WTC11 (cell line): ENCODE measurements at regions of chr2 and their contacts with region 1.

Region 1: GRCh38 chr2:43024515-43025011 is 201.8 kb downstream of the ZFP36L2 start:
- DNase-seq: peak; percentile 85
- ATAC-seq: peak; percentile 92
- H3K4me3 Mint-ChIP-seq: no peak overlapping the region
- H3K27ac Mint-ChIP-seq: no peak overlapping the region
- H3K4me1 Mint-ChIP-seq: peaks cover 5% of the 10 kb centered on the region
- H3K27me3 Mint-ChIP-seq: peaks cover 3% of the 10 kb centered on the region
- CTCF ChIP-seq: peak; percentile 40; the same call in 1 of the 2 replicates

Region 2: DNA sequence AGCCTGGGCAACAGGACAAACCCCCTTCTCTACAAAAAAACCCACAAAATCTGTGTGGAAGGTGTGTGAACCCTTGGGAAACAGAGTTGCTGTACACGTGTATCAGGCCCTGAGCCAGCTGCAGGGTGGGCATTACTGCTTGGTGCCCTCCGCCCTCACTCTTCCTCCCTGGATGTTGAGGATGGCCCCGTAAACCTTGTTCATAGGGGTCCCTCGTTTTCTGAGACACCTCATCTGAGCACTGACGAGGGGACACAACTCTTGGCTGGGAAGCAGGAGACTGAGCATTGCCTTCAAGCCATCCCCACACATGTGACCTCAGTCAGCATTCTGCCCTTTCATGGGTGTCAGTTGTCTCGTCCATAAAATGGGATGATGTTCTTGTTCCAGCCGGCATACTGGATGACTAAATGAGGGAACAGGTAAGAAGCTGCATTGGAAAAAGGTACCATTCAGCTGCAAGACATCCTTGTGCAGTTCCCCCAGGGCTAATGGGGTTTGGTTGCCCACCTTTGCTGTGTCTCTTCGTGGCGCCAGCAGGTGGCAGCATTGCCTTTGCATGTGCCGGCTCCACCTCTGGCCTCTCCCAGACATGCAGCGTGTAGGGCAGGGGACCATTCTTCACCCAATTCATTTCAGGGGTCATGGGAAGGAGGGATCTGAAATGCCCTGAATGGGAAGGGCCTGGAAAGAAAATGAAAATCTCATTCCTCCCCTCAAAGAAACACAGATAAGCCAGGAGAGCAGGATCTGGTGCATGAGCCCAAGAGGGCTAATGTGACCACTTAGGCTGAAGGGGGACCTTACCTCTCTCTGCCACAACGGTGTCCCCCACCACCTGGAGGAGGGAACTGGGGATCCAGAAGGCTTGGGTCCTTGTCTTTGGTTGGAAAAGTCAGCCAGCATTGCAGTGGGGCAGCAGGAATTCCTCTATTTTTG is 195.8 kb before region 1 on chr2:
- CTCF ChIA-PET with region 1: interaction called, 11 read pairs
- POLR2A ChIA-PET with region 1: no interaction called
- DNase-seq: peak; percentile 82
- ATAC-seq: peak; percentile 89
- H3K4me3 Mint-ChIP-seq: no peak overlapping the region
- H3K27ac Mint-ChIP-seq: no peak overlapping the region
- H3K4me1 Mint-ChIP-seq: 0 out of 2 replicates have a peak, but pooled peaks cover 8% of the 10 kb centered on the region
- H3K27me3 Mint-ChIP-seq: peaks cover 16% of the 10 kb centered on the region
- CTCF ChIP-seq: peak; percentile 81

Region 3: DNA sequence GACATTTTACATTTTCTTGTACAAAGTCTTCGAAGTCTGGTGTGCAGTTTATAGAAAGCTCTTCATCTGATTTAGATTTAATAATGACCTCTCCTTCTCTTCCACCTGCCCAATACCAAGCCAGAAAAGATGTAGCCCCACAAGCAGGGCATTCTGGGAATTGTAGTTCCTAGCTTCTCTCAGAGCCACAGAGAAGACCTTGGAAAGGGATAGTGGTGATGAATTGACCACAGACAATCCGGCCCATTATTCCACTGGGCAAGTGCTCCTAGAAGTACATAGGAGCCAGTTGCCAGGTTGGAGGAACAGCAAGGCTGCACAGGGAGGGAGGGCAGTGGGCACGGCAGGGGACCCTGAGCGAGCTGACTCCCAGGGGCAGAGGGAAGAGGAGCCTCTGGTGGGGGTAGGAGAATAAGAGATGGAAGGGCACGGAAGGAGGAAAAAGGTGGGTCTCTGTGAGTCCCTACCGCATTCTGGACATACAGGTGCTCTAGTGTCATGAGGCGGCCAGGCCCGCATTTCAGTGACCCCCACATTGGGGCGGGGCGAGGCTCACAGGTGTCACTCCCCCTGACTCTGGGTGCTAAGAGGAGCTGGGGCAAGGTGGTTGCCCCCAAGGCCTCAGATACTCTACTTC is 79.7 kb before region 1 on chr2:
- CTCF ChIA-PET with region 1: interaction called, 12 read pairs
- POLR2A ChIA-PET with region 1: no interaction called
- DNase-seq: no peak
- ATAC-seq: peak; percentile 63
- H3K4me3 Mint-ChIP-seq: no peak overlapping the region
- H3K27ac Mint-ChIP-seq: no peak overlapping the region
- H3K4me1 Mint-ChIP-seq: no peaks in the 10 kb centered on the region
- H3K27me3 Mint-ChIP-seq: no peaks in the 10 kb centered on the region
- CTCF ChIP-seq: no peak

Region 4: GRCh38 chr2:42974721-42975717 is 49.5 kb before region 1 on chr2:
- CTCF ChIA-PET with region 1: interaction called, 31 read pairs
- POLR2A ChIA-PET with region 1: no interaction called
- DNase-seq: peak; percentile 89
- ATAC-seq: peak; percentile 91
- H3K4me3 Mint-ChIP-seq: peak overlapping the region; percentile 64
- H3K27ac Mint-ChIP-seq: no peak overlapping the region
- H3K4me1 Mint-ChIP-seq: peaks cover 11% of the 10 kb centered on the region
- H3K27me3 Mint-ChIP-seq: no peaks in the 10 kb centered on the region; the same call in 1 of the 2 replicates
- CTCF ChIP-seq: peak; percentile 60

Region 5: GRCh38 chr2:43040084-43040854 is 15.7 kb after region 1 on chr2:
- CTCF ChIA-PET with region 1: interaction called, 11 read pairs
- POLR2A ChIA-PET with region 1: no interaction called
- DNase-seq: no peak
- ATAC-seq: no peak
- H3K4me3 Mint-ChIP-seq: no peak overlapping the region
- H3K27ac Mint-ChIP-seq: peak overlapping the region; percentile 24; the same call in 1 of the 2 replicates
- H3K4me1 Mint-ChIP-seq: peaks cover 11% of the 10 kb centered on the region
- H3K27me3 Mint-ChIP-seq: no peaks in the 10 kb centered on the region
- CTCF ChIP-seq: no peak

Region 6: DNA sequence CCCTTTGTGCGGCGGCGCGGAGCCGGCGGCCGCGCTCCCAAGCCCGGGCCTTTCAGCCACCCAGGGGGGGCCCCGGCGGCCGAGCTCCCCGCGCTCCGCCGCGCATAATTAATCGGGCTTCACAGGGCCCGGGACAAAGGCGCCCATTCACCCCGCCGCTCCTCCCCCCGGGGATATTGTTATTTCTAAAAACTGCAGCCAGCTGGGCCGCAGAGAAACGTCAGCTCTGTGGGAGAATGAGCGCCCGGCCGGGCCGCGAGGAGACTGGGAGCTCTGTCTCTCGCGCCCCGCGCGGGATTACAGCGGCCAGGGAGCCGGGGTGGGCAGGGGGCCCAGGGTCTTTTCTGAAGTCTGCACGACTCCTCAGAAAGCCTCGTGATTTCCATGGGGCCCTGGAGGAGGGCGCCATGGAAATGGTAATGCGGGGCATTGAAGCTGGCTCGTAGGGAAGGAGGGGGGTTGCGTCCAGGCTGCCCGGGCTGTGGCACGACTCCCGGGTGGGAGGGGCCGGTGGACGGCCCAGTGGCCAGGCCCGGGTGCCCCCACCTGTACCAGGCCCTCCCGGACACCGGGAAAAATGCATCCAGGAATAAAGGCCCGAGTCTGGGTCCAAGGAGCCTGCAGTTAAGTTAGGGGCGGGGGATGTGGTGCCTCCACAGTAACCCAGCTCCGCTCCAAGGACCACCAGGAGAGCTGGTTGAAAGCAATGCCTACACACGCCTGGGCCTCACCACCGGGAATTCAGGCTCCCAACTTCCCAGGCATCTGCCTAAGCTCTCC is 76.5 kb after region 1 on chr2:
- CTCF ChIA-PET with region 1: interaction called, 12 read pairs
- POLR2A ChIA-PET with region 1: no interaction called
- DNase-seq: peak; percentile 73
- ATAC-seq: peak; percentile 61
- H3K4me3 Mint-ChIP-seq: peak overlapping the region; percentile 63
- H3K27ac Mint-ChIP-seq: no peak overlapping the region
- H3K4me1 Mint-ChIP-seq: peaks cover 27% of the 10 kb centered on the region
- H3K27me3 Mint-ChIP-seq: peaks cover 34% of the 10 kb centered on the region
- CTCF ChIP-seq: no peak